Ovary (tissue), 10 donors: ENCODE measurements at regions of chr4 and their contacts with region 1.

Region 1: GRCh38 chr4:2536193-2537010 is at the start of gene FAM193A:
- DNase-seq: peak; percentile 98 to 99 (median 99)
- H3K4me3 ChIP-seq: peak within 1 kb of the TSS; percentile 97
- H3K27ac ChIP-seq: peak within 1 kb of the TSS; percentile 79 to 90
- H3K4me1 ChIP-seq: peaks cover 8% of the 10 kb centered on the region
- H3K27me3 ChIP-seq: no peaks in the 10 kb centered on the region
- CTCF ChIP-seq: peak in 1 of 3 donors; percentile 13
- EP300 ChIP-seq: no peak
- POLR2A ChIP-seq: no peak
- total RNA-seq, gene FAM193A: 18.5 to 39.1 (median 29.4) TPM

Region 2: GRCh38 chr4:2255501-2256155 is 280.8 kb before region 1 on chr4:
- intact Hi-C with region 1: loop called in 2 of 4 experiments (anchors 10 kb)
- DNase-seq: peak; percentile 39 to 81 (median 71)
- H3K4me3 ChIP-seq: peak overlapping the region; percentile 26
- H3K27ac ChIP-seq: peak overlapping the region; percentile 58 to 71
- H3K4me1 ChIP-seq: peaks cover 21% of the 10 kb centered on the region
- H3K27me3 ChIP-seq: no peaks in the 10 kb centered on the region
- CTCF ChIP-seq: no peak
- EP300 ChIP-seq: no peak
- POLR2A ChIP-seq: no peak

Region 3: GRCh38 chr4:2262143-2262943 is 274.1 kb before region 1 on chr4:
- intact Hi-C with region 1: loop called in 2 of 4 experiments (anchors 10 kb)
- DNase-seq: peak; percentile 98 to 100 (median 99)
- H3K4me3 ChIP-seq: peak overlapping the region; percentile 43
- H3K27ac ChIP-seq: peak overlapping the region; percentile 61 to 97
- H3K4me1 ChIP-seq: peaks cover 12% of the 10 kb centered on the region
- H3K27me3 ChIP-seq: no peaks in the 10 kb centered on the region
- CTCF ChIP-seq: no peak
- EP300 ChIP-seq: no peak
- POLR2A ChIP-seq: peak; percentile 88

Region 4: GRCh38 chr4:2462218-2462991 is 74.0 kb before region 1 on chr4:
- intact Hi-C with region 1: loop called in 2 of 4 experiments (anchors 5 to 10 kb)
- DNase-seq: peak; percentile 65 to 83 (median 72)
- H3K4me3 ChIP-seq: peak overlapping the region; percentile 38
- H3K27ac ChIP-seq: peak overlapping the region in 1 of 2 donors; percentile 72
- H3K4me1 ChIP-seq: no peaks in the 10 kb centered on the region
- H3K27me3 ChIP-seq: no peaks in the 10 kb centered on the region
- CTCF ChIP-seq: peak; percentile 39 to 60 (median 56)
- EP300 ChIP-seq: no peak
- POLR2A ChIP-seq: no peak

Region 5: GRCh38 chr4:2468445-2469192 is 67.8 kb before region 1 on chr4 and contains the start of gene RNF4:
- intact Hi-C with region 1: loop called in 2 of 4 experiments (anchors 5 to 10 kb)
- DNase-seq: peak; percentile 93 to 97 (median 94)
- H3K4me3 ChIP-seq: peak within 1 kb of the TSS; percentile 99
- H3K27ac ChIP-seq: peak within 1 kb of the TSS; percentile 67 to 93
- H3K4me1 ChIP-seq: peaks cover 3% of the 10 kb centered on the region
- H3K27me3 ChIP-seq: no peaks in the 10 kb centered on the region
- CTCF ChIP-seq: no peak
- EP300 ChIP-seq: no peak
- POLR2A ChIP-seq: peak; percentile 49
- total RNA-seq, gene RNF4: 27.9 to 72.1 (median 47.1) TPM

Region 6: GRCh38 chr4:2934813-2935761 is 398.7 kb after region 1 on chr4:
- intact Hi-C with region 1: loop called in 1 of 4 experiments (anchors 10 kb)
- DNase-seq: peak; percentile 96 to 99 (median 98)
- H3K4me3 ChIP-seq: peak overlapping the region; percentile 96
- H3K27ac ChIP-seq: peak overlapping the region; percentile 32 to 78
- H3K4me1 ChIP-seq: peaks cover 8% of the 10 kb centered on the region
- H3K27me3 ChIP-seq: no peaks in the 10 kb centered on the region
- CTCF ChIP-seq: no peak
- EP300 ChIP-seq: no peak
- POLR2A ChIP-seq: peak; percentile 93